HepG2 (cell line): ENCODE measurements at regions of chr18 and their contacts with region 1.

Region 1: DNA sequence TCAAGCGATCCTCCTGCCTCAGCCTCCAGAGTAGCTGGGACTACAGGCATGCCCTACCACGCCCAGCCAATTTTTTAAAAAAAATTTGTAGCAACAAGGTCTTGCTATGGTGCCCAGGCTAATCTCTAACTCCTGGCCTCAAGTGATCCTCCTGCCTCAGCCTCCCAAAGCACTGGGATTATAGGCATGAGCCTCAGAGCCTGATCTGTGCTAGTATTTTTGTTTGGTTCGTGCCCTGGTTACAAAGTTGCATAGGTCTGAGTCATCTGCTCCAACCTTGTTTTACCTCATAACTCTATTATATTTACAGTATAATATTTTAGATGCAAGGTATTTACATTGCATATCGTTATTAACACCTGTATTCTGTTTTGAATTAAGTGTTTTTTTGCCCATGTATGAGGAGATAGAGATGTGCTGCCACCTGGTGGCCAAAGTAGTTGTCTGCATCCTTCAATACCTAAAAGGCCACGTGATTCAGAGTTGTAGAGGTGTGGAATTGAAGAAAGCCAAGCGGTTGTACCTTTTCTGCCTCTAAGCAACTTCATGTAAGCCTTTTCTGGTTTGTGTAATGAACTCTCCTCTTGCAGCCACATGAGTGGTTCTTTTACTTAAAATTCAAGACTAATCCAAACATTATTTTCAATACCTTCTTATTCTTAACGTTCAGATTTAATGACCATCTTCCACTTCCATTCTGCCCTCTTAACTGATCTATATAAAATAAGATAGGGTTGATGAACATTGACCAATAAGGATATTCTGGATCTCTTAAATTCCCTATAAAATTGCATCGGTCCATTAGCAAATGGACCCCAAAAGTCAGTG is 19.9 kb upstream of the CABYR start:
- DNase-seq: peak; percentile 70
- ATAC-seq: peak; percentile 68
- H3K4me3 ChIP-seq: no peak overlapping the region
- H3K27ac ChIP-seq: no peak overlapping the region
- H3K4me1 ChIP-seq: peaks cover 24% of the 10 kb centered on the region
- H3K27me3 ChIP-seq: no peaks in the 10 kb centered on the region
- CTCF ChIP-seq: peak; percentile 84
- EP300 ChIP-seq: no peak
- POLR2A ChIP-seq: no peak
- RAD21 ChIP-seq: peak; percentile 81

Region 2: DNA sequence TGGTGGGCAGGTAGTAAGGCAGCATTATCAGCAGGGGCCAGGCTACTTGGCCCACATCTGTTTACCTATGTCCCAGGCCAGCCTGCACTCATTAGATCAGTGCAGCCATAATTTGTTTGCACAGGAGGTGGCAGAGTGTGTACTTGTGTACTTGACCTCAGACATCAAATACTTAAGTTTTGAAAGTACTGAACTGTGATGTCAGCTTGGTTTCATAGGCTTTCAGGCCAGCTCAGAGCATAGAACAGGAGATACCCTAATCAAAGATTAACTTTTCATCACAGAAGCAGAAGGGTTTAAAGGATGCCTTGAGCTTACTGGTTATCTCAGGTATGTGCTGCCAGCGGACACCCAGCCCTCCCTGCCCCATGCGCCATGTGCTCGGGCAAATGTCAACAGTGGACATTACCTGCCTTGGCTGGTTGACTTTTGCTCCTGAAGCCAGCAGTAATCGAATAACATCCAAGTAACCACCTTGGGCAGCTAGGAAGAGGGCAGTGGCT is 489.5 kb before region 1 on chr18:
- CTCF ChIA-PET with region 1: no interaction called
- POLR2A ChIA-PET with region 1: no interaction called
- in situ Hi-C with region 1: no loop called
- intact Hi-C with region 1: loop called (anchors 5 kb)
- DNase-seq: peak; percentile 92
- ATAC-seq: peak; percentile 95
- H3K4me3 ChIP-seq: no peak overlapping the region
- H3K27ac ChIP-seq: no peak overlapping the region
- H3K4me1 ChIP-seq: peaks cover 36% of the 10 kb centered on the region
- H3K27me3 ChIP-seq: peaks cover 0 to 4% of the 10 kb centered on the region in 2 experiments; a peak in 2 of 5 replicates
- CTCF ChIP-seq: no peak
- EP300 ChIP-seq: peak in 1 of 2 experiments; percentile 62; a peak in 1 of 4 replicates
- POLR2A ChIP-seq: no peak
- RAD21 ChIP-seq: no peak

Region 3: GRCh38 chr18:23828426-23828825 is 290.5 kb before region 1 on chr18:
- CTCF ChIA-PET with region 1: no interaction called
- POLR2A ChIA-PET with region 1: no interaction called
- in situ Hi-C with region 1: loop called (anchors 10 kb)
- intact Hi-C with region 1: loop called (anchors 1 kb)
- DNase-seq: peak; percentile 23
- ATAC-seq: no peak
- H3K4me3 ChIP-seq: no peak overlapping the region
- H3K27ac ChIP-seq: no peak overlapping the region
- H3K4me1 ChIP-seq: peaks cover 16% of the 10 kb centered on the region
- H3K27me3 ChIP-seq: 0 out of 5 replicates have a peak, but pooled peaks cover 0 to 2% of the 10 kb centered on the region in 2 experiments
- CTCF ChIP-seq: no peak
- EP300 ChIP-seq: no peak
- POLR2A ChIP-seq: no peak
- RAD21 ChIP-seq: no peak

Region 4: DNA sequence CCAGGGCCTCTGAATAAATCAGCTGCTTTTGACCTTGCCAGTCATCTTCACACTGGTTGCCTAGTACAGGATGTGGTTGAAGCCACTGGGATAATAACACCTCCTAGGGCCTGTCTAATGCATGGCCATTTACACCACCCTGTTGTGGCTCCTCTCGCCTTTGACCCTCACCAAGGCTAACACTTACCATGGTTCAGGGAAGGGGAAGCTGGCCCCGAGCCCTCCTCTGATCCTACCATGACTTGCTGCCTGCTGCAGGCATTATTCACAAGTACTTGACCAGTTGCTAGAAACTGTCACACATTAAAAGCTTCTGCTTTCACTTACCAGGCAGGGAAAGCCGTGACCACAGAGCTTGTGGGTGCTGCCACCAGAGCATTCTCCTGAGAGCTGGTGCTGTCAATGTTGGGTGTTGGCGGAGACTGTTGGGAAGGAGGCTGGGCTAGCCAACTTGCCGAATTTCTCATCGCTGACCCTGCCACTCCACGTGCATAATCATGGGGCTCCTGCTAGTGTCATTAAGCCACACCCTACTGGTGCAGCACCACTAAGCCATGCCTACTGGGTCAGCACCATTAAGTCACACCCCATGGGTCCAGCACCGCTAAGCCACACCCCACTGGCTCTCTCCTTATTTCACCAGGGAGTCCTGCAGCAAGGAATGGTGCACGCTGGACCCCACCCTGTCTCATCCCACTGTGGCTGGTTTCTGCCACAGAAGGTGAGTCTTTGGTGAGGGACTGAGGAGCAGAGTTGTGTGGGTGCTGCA is 151.5 kb before region 1 on chr18:
- CTCF ChIA-PET with region 1: interaction called, 3 read pairs
- POLR2A ChIA-PET with region 1: no interaction called
- in situ Hi-C with region 1: loop called (anchors 5 kb)
- intact Hi-C with region 1: no loop called
- DNase-seq: no peak
- ATAC-seq: no peak
- H3K4me3 ChIP-seq: no peak overlapping the region
- H3K27ac ChIP-seq: no peak overlapping the region
- H3K4me1 ChIP-seq: no peaks in the 10 kb centered on the region
- H3K27me3 ChIP-seq: no peaks in the 10 kb centered on the region; a peak in 2 of 5 replicates
- CTCF ChIP-seq: no peak
- EP300 ChIP-seq: no peak
- POLR2A ChIP-seq: no peak
- RAD21 ChIP-seq: no peak

Region 5: GRCh38 chr18:24075731-24076130 is 43.2 kb before region 1 on chr18:
- CTCF ChIA-PET with region 1: no interaction called
- POLR2A ChIA-PET with region 1: no interaction called
- in situ Hi-C with region 1: no loop called
- intact Hi-C with region 1: loop called (anchors 2 kb)
- DNase-seq: no peak
- ATAC-seq: peak; percentile 14
- H3K4me3 ChIP-seq: no peak overlapping the region
- H3K27ac ChIP-seq: no peak overlapping the region
- H3K4me1 ChIP-seq: peaks cover 27% of the 10 kb centered on the region
- H3K27me3 ChIP-seq: 0 out of 5 replicates have a peak, but pooled peaks cover 0 to 1% of the 10 kb centered on the region in 2 experiments
- CTCF ChIP-seq: no peak
- EP300 ChIP-seq: no peak
- POLR2A ChIP-seq: no peak
- RAD21 ChIP-seq: no peak

Region 6: DNA sequence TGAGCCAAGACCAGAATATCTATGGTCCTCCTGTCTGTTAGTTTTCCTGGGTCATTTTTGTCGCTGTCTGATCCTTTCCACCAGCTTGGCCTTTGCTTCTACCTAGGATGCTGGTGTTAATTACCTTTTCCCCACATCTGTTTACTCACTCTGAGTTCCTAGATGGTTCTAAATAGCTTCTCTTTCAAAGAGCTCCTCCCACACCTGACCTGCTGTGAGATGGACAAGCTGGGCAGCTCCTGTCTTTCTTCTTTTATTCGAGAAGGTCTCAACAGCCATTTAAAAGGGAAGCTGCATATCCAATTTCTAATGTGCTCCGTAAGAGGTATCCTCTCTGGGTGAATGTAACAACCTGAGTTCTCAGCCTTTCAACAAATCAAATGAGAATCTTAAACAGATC is 497.7 kb after region 1 on chr18:
- CTCF ChIA-PET with region 1: no interaction called
- POLR2A ChIA-PET with region 1: no interaction called
- in situ Hi-C with region 1: no loop called
- intact Hi-C with region 1: no loop called
- DNase-seq: no peak
- ATAC-seq: no peak
- H3K4me3 ChIP-seq: no peak overlapping the region
- H3K27ac ChIP-seq: no peak overlapping the region
- H3K4me1 ChIP-seq: no peaks in the 10 kb centered on the region
- H3K27me3 ChIP-seq: no peaks in the 10 kb centered on the region
- CTCF ChIP-seq: no peak
- EP300 ChIP-seq: no peak
- POLR2A ChIP-seq: no peak
- RAD21 ChIP-seq: no peak